GM12878 (cell line): ENCODE measurements at regions of chr20 and their contacts with region 1.

Region 1: GRCh38 chr20:48620519-48621254 is 207.1 kb downstream of the PREX1 start:
- DNase-seq: peak; percentile 36
- ATAC-seq: peak; percentile 95
- H3K4me3 ChIP-seq: no peak overlapping the region
- H3K27ac ChIP-seq: no peak overlapping the region
- H3K4me1 ChIP-seq: peaks cover 3% of the 10 kb centered on the region; the same call in 1 of the 2 replicates
- H3K27me3 ChIP-seq: no peaks in the 10 kb centered on the region
- CTCF ChIP-seq: peak; percentile 88 to 98 (median 97)
- EP300 ChIP-seq: no peak
- POLR2A ChIP-seq: no peak
- RAD21 ChIP-seq: peak; percentile 98

Region 2: DNA sequence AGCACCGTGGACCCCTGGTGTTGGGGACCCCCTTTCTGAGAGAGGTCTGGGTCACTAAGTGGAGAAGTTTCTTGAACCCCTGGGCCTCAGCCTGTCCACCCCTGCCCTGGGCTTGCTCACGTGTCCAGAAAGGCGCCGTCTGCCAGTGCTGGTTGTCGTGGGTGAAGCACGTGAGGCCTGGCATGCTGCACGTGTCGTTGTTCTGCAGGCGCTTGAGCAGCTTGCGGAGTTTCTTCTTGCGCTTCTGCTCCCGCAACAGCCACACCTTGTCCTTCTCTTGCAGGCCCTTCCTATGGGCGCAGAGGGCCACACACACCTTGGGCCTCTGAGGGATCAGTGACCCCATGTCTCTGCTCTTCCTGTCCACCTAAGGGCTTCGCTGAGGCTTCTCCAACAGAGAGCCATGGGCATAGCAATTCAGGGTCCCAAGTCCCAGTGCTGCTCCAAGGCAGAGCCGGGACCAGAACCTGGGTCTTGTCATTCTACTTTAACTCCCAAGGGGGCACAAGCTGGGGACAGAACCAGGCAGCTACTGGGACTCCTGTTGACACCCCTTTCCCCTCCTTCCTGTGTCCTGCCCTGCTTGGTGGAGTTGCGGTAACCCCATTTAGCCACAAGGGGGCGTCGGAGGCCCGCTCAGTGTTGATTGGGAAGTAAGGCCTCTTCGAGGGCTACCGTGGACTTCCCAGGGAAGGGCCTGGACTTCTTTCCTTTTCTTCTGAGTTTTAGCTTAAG is 957.2 kb before region 1 on chr20:
- CTCF ChIA-PET with region 1: interaction called, 18 read pairs
- POLR2A ChIA-PET with region 1: no interaction called
- RAD21 ChIA-PET with region 1: interaction called, 8 read pairs
- SMC1A ChIA-PET with region 1: interaction called, 10 read pairs
- in situ Hi-C with region 1: no loop called
- intact Hi-C with region 1: loop called (anchors 1 kb)
- DNase-seq: peak; percentile 19
- ATAC-seq: peak; percentile 83
- H3K4me3 ChIP-seq: no peak overlapping the region
- H3K27ac ChIP-seq: no peak overlapping the region
- H3K4me1 ChIP-seq: no peaks in the 10 kb centered on the region
- H3K27me3 ChIP-seq: no peaks in the 10 kb centered on the region
- CTCF ChIP-seq: peak; percentile 94 to 97 (median 97)
- EP300 ChIP-seq: no peak
- POLR2A ChIP-seq: peak; percentile 67
- RAD21 ChIP-seq: peak; percentile 78

Region 3: DNA sequence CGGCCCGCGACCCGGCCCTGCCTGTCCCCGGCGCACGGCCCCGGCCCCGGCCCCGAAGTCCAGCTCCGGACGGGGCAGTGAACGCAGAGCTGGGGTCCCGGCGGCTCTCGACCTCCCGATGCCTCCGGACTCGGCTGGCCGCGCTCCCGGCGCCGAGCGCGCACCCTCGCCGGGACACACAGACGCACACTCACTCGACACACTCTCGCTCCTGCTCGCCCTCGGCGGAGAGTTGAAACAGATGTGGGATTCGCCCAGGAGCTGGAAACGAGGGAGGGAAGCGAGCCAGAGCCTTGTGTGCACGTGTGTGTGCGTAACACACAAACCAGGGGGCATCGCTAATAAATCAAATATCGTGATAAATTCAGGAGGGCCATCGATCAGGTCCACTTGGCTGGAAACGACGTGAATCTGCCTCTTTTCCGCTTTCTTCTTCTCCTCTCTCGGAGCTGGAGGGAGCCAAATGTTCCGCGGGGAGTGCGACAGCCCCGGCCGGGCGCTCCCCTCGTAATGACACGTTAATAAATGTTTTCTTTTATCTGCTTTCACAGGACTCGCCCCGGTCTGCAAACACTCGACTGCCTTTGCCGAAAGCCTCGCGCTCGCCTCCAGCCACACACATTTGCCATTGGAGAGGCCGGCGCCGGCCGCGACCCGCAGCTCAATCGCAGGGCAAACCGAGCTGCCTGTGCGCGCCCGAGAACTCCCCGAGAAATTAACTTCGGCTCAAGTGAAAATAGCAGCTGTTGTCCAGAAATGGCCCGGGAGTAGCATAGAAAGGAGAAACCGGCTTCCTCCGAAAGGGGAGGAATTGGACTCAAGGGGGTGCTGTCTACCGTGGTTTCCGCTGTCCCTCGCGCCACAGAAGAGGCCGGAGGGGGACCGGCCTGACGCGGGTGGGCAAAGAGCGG is 834.6 kb before region 1 on chr20:
- CTCF ChIA-PET with region 1: interaction called, 19 read pairs
- POLR2A ChIA-PET with region 1: no interaction called
- RAD21 ChIA-PET with region 1: interaction called, 10 read pairs
- SMC1A ChIA-PET with region 1: interaction called, 7 read pairs
- in situ Hi-C with region 1: loop called (anchors 5 kb)
- intact Hi-C with region 1: loop called (anchors 1 kb)
- DNase-seq: no peak
- ATAC-seq: peak; percentile 85
- H3K4me3 ChIP-seq: peak overlapping the region; percentile 8; the same call in 1 of the 2 replicates
- H3K27ac ChIP-seq: no peak overlapping the region
- H3K4me1 ChIP-seq: 0 out of 2 replicates have a peak, but pooled peaks cover 2% of the 10 kb centered on the region
- H3K27me3 ChIP-seq: peaks cover 6 to 20% of the 10 kb centered on the region in 2 experiments
- CTCF ChIP-seq: peak; percentile 41 to 62 (median 42); a peak in 5 of 6 replicates
- EP300 ChIP-seq: no peak
- POLR2A ChIP-seq: no peak
- RAD21 ChIP-seq: peak; percentile 83

Region 4: GRCh38 chr20:48350313-48351008 is 270.2 kb before region 1 on chr20:
- CTCF ChIA-PET with region 1: interaction called, 16 read pairs
- POLR2A ChIA-PET with region 1: no interaction called
- RAD21 ChIA-PET with region 1: interaction called, 3 read pairs
- SMC1A ChIA-PET with region 1: interaction called, 3 read pairs
- in situ Hi-C with region 1: no loop called
- intact Hi-C with region 1: no loop called
- DNase-seq: no peak
- ATAC-seq: peak; percentile 75
- H3K4me3 ChIP-seq: no peak overlapping the region
- H3K27ac ChIP-seq: no peak overlapping the region
- H3K4me1 ChIP-seq: no peaks in the 10 kb centered on the region
- H3K27me3 ChIP-seq: no peaks in the 10 kb centered on the region
- CTCF ChIP-seq: peak; percentile 9 to 53 (median 41); a peak in 4 of 6 replicates
- EP300 ChIP-seq: no peak
- POLR2A ChIP-seq: no peak
- RAD21 ChIP-seq: peak; percentile 43

Region 5: DNA sequence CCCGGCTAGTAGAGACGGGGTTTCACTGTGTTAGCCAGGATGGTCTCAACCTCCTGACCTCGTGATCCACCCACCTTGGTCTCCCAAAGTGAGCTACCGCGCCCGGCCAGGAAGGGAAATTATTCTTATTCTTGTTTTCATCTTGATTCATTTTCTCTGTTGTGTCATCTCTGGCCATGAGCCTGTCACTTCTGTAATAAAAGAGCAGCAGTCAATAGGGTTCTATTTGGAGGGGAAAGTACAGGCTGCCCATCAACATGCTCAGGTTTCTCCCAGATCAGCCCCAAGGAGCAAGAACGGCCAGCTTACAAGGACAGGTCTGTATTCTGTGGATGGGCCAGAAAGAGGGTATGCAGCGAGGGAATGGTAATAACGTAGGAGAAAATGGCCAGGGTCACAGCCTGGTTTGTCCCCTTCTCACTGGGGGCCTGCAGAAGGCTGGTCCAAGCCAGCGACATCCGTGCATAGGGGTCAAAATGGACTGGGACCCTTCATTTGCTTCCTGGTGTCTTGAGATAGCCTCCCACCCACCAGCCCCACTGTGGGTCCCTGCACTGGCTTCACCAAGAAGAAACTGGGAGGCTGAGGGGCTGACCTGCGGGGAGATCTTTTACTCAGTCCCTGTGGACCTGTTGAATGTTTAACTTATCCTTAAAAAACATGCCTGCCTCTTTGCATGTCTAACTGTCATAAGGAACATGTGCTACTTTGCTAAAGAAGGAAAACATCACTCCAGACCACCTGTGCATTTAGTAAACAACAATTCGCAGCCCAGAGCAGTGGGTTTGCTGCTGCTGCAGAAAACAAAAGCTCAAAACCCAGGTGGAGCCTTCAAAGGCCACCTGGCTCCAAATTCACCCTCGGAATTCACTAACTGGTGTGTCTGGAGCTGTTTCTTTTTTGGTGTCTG is 137.6 kb before region 1 on chr20:
- CTCF ChIA-PET with region 1: interaction called, 8 read pairs
- POLR2A ChIA-PET with region 1: no interaction called
- RAD21 ChIA-PET with region 1: interaction called, 5 read pairs
- SMC1A ChIA-PET with region 1: interaction called, 5 read pairs
- in situ Hi-C with region 1: no loop called
- intact Hi-C with region 1: loop called (anchors 5 kb)
- DNase-seq: no peak
- ATAC-seq: peak; percentile 82
- H3K4me3 ChIP-seq: no peak overlapping the region
- H3K27ac ChIP-seq: no peak overlapping the region
- H3K4me1 ChIP-seq: peaks cover 15% of the 10 kb centered on the region
- H3K27me3 ChIP-seq: no peaks in the 10 kb centered on the region
- CTCF ChIP-seq: no peak
- EP300 ChIP-seq: no peak
- POLR2A ChIP-seq: no peak
- RAD21 ChIP-seq: no peak

Region 6: GRCh38 chr20:48595495-48596338 is 25.0 kb before region 1 on chr20:
- CTCF ChIA-PET with region 1: interaction called, 11 read pairs
- POLR2A ChIA-PET with region 1: no interaction called
- RAD21 ChIA-PET with region 1: interaction called, 6 read pairs
- SMC1A ChIA-PET with region 1: interaction called, 4 read pairs
- in situ Hi-C with region 1: no loop called
- intact Hi-C with region 1: no loop called
- DNase-seq: no peak
- ATAC-seq: no peak
- H3K4me3 ChIP-seq: no peak overlapping the region
- H3K27ac ChIP-seq: no peak overlapping the region
- H3K4me1 ChIP-seq: no peaks in the 10 kb centered on the region
- H3K27me3 ChIP-seq: no peaks in the 10 kb centered on the region
- CTCF ChIP-seq: no peak
- EP300 ChIP-seq: no peak
- POLR2A ChIP-seq: no peak
- RAD21 ChIP-seq: no peak